Activated CD4-positive, alpha-beta T cell treated with anti-CD3 and anti-CD28 coated beads for 36 hours (primary cell): ENCODE measurements at regions of chr19 and their contacts with region 1.

Region 1: DNA sequence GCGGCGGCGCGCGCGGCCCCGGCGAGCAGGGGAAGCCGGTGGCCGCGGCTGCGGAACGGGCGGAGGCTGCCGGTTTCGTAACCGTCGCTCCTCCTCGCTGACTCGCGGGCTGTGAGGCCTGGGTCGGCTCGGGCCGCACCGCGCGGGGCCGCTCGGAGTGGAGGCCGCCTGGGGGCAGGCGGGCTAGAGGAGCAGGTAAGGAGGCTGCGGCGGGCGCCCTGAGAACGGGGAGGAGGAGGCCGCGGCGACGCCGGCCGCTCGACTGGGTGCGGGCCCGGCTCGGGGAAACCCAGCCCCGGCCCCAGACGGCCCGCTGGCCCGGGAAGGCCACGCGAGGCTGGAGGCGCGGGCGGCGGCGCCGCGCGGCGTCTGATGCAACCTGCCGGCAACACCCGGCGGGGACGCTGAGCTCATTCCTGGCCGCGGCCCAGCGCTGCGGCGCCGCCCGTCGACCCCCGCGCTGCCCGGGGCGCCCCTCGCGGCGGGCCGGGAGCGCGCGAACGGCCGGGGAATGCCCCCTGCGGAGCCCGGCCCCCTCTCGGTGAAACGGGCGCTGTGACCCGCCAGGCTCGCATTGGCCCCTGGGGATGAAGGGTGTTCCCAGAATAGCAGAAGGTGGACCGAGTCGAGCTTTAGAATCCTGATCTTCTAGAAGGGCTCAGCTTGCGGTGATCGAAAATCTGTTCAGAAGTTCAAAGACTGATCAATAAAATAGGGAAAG is at the start of gene CEBPG:
- DNase-seq: peak; percentile 78
- ATAC-seq: peak; percentile 42
- H3K4me3 Mint-ChIP-seq: peak within 1 kb of the TSS; percentile 94
- H3K27ac Mint-ChIP-seq: peak within 1 kb of the TSS; percentile 93
- H3K4me1 Mint-ChIP-seq: peaks cover 45% of the 10 kb centered on the region
- H3K27me3 Mint-ChIP-seq: no peaks in the 10 kb centered on the region
- total RNA-seq, gene CEBPG: 25.9 to 29.6 TPM

Region 2: DNA sequence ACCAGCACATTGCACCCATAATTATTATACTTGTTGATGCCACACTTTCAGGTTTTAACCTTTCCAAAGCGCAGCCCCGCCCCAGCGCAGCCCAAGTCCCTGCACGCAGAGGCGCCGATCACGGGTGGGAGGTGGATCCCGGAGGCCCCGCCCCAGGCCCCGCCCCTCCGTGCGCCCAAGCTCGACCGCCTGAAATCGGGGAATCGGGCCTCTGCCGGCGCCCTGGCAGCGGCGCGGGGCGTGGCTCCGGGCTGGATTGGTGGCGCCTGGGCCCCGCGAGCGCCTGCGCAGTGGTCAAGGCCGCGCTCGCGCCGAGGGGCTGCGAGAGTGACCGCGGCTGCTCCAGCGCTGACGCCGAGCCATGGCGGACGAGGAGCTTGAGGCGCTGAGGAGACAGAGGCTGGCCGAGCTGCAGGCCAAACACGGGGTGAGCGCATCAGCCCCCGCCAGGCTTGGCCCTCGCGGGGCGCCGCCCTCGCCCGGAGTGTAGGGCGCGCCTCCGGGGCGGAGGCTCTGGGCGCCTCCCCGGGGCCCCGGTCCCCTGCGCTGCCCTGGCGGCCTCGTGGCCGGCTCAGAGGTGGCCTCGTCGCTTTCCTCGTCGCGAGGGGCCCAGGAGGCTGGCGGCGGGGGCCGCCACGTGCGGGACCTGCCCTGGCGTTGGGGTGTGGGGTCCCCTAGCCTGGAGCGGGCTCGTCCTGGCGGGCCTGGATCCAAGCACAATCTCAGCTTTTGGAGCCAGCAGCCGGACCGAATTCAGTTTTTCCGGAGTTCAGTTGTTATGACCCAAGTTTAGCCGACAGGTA is 792.8 kb before region 1 on chr19 and contains the start of gene PDCD5:
- CTCF ChIA-PET with region 1: no interaction called
- POLR2A ChIA-PET with region 1: no interaction called
- intact Hi-C with region 1: loop called in 1 of 2 experiments (anchors 2 kb)
- DNase-seq: peak; percentile 99
- ATAC-seq: peak; percentile 90
- H3K4me3 Mint-ChIP-seq: peak within 1 kb of the TSS; percentile 92
- H3K27ac Mint-ChIP-seq: peak within 1 kb of the TSS; percentile 91
- H3K4me1 Mint-ChIP-seq: peaks cover 33% of the 10 kb centered on the region
- H3K27me3 Mint-ChIP-seq: peaks cover under 1% of the 10 kb centered on the region
- total RNA-seq, gene PDCD5: 268 to 272 TPM

Region 3: DNA sequence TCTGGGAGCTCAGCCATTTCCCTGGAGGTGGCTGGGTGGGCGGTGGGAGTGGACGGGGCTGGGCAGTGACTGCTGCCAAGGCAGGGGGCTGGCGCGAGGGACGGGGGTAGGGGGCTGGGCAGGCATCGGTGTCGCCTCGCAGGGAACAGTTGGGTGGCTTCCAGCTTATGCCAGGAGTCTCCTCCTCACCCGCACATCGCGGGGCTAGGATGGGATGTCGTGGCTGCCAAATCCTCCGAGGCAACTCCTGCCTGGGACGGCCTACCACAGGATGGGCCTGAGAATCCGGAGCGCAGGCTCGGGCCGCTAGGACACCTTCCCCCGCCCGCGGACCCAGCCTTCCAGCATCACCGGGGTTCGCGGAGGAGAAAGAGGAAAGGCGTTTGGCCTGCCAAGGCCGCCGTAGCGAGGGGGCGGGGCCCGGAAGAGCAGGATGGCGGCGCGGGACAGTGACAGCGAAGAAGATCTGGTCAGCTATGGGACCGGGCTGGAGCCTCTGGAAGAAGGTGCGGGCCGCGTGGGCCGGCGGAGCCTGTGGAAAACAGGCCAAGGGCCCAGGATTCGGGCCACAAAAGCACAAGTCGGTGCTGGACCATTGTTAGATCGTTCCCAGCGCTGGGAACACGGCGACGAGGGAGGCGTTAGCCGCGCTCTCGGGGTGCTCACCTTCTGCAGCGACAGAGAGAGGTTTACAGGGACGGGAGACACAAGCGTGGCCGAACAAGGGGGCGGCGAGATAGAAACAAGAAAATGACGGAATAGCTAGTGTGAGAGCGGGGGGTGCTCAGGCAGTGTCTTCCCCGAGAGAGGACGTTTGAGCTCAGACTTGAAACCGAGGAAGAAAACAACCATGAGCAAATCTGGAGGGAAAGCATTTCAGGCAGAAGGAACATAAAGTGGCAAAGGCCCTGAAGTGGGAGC is 292.8 kb before region 1 on chr19 and contains the start of gene GPATCH1:
- CTCF ChIA-PET with region 1: no interaction called
- POLR2A ChIA-PET with region 1: no interaction called
- intact Hi-C with region 1: loop called in 1 of 2 experiments (anchors 1 kb)
- DNase-seq: peak; percentile 93
- ATAC-seq: peak; percentile 94
- H3K4me3 Mint-ChIP-seq: peak within 1 kb of the TSS; percentile 99
- H3K27ac Mint-ChIP-seq: peak within 1 kb of the TSS; percentile 97
- H3K4me1 Mint-ChIP-seq: peaks cover 16% of the 10 kb centered on the region
- H3K27me3 Mint-ChIP-seq: no peaks in the 10 kb centered on the region
- total RNA-seq, gene GPATCH1: 9.5 to 11.1 TPM

Region 4: DNA sequence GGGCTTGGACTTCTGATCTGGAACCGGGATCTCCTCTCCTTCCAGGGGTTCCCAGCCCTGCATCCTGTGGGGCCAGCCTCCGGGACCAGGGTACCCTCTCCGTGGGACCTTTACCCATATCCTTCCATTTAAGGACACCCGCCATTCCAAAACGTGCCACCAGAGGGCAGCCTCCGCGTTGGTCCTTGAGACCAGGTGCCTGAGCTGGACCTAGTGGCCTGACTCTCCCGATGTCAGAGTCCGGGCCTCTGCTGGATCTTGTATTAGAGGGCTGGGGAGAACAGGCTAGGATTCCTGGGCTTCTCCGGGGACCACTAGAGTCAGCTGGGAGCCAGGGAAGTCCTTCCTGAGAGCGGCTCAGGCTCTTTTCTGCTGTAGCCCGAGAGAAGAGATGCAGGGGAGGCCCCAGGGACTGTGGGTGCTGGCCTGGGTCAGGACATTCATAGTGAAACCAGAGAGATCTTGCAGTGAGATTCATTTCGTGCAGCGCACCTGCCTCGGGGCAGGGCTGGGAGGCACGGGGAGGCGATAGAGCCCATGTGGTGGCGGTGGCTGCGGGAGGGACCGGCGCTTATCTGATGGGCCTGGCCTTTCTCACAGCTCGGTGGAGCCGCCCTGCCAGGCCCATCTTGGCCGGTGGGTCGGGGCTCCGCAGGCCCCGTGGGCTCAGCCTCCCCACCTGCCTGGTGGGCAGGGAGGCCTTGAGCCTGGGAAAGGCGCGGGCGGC is 138.4 kb before region 1 on chr19:
- CTCF ChIA-PET with region 1: interaction called, 5 read pairs
- POLR2A ChIA-PET with region 1: no interaction called
- intact Hi-C with region 1: loop called in 1 of 2 experiments (anchors 1 kb)
- DNase-seq: peak; percentile 87
- ATAC-seq: peak; percentile 94
- H3K4me3 Mint-ChIP-seq: peak overlapping the region; percentile 30
- H3K27ac Mint-ChIP-seq: no peak overlapping the region
- H3K4me1 Mint-ChIP-seq: peaks cover 7% of the 10 kb centered on the region
- H3K27me3 Mint-ChIP-seq: peaks cover 5% of the 10 kb centered on the region

Region 5: DNA sequence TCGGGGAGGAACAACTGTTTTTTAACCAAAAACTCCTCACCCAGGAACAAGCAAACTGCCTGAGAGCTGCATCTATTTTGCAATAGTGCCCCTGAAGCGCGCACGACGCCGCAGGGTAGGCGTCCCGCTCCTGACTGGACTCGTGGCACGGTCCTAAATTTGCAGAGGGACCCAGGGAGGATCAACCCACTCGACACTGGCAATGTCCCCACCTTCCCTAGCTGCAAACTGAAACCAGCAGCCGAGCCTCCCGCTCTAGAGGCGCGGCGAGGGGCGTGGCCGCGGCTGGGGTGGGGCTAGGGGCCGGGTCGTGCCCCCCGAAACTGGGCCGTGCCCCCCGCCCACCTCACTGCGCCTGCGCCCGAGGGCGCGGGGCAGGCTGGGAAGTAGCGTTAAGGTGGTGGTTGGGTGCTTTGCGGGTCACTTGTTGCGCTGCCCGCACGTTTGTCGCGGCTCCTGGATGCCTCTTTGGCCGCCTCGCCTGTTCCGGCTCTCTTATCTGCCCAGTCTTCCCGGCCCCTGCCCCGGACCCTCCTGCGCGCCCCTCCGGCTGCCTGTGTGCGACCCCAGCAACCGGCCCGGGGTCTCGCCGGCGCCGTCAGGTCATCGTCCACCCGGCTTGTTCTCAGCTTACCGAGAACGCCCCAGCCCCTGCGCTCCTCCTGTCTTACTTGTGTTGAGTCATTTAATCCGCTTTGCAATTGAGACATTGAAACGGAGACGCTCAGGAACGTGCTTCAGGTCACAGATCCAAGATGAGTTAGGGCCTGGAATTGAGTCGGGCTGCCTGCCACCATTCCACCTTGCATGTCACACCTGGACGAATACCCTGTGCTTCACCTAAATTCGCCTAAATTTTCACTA is 760.6 kb after region 1 on chr19:
- CTCF ChIA-PET with region 1: no interaction called
- POLR2A ChIA-PET with region 1: no interaction called
- intact Hi-C with region 1: loop called in 1 of 2 experiments (anchors 10 kb)
- DNase-seq: peak; percentile 94
- ATAC-seq: peak; percentile 94
- H3K4me3 Mint-ChIP-seq: peak overlapping the region; percentile 92
- H3K27ac Mint-ChIP-seq: peak overlapping the region; percentile 95
- H3K4me1 Mint-ChIP-seq: peaks cover 9% of the 10 kb centered on the region
- H3K27me3 Mint-ChIP-seq: no peaks in the 10 kb centered on the region

Region 6: GRCh38 chr19:34428549-34429285 is 1054.9 kb after region 1 on chr19:
- CTCF ChIA-PET with region 1: no interaction called
- POLR2A ChIA-PET with region 1: no interaction called
- intact Hi-C with region 1: loop called in 1 of 2 experiments (anchors 2 kb)
- DNase-seq: peak; percentile 63
- ATAC-seq: peak; percentile 28
- H3K4me3 Mint-ChIP-seq: peak overlapping the region; percentile 99
- H3K27ac Mint-ChIP-seq: peak overlapping the region; percentile 92
- H3K4me1 Mint-ChIP-seq: peaks cover 28% of the 10 kb centered on the region
- H3K27me3 Mint-ChIP-seq: no peaks in the 10 kb centered on the region